Vagina (tissue), 2 donors: ENCODE measurements at regions of chr7 and their contacts with region 1.

Region 1: GRCh38 chr7:50657341-50657873 is 92.2 kb upstream of the DDC start:
- DNase-seq: peak in 1 of 2 donors; percentile 94
- H3K4me3 ChIP-seq: no peak overlapping the region
- H3K27ac ChIP-seq: peak overlapping the region; percentile 64
- H3K4me1 ChIP-seq: peaks cover 82% of the 10 kb centered on the region
- H3K27me3 ChIP-seq: no peaks in the 10 kb centered on the region
- CTCF ChIP-seq: peak in 1 of 3 experiments; percentile 36
- POLR2A ChIP-seq: no peak

Region 2: GRCh38 chr7:50502001-50502684 is 155.3 kb before region 1 on chr7:
- intact Hi-C with region 1: loop called (anchors 5 kb)
- DNase-seq: peak in 1 of 2 donors; percentile 97
- H3K4me3 ChIP-seq: peak overlapping the region in 1 of 2 donors; percentile 2
- H3K27ac ChIP-seq: peak overlapping the region; percentile 78
- H3K4me1 ChIP-seq: peaks cover 29% of the 10 kb centered on the region
- H3K27me3 ChIP-seq: no peaks in the 10 kb centered on the region
- CTCF ChIP-seq: no peak
- POLR2A ChIP-seq: no peak